Panc1 (cell line): ENCODE measurements at regions of chr6 and their contacts with region 1.

Region 1: DNA sequence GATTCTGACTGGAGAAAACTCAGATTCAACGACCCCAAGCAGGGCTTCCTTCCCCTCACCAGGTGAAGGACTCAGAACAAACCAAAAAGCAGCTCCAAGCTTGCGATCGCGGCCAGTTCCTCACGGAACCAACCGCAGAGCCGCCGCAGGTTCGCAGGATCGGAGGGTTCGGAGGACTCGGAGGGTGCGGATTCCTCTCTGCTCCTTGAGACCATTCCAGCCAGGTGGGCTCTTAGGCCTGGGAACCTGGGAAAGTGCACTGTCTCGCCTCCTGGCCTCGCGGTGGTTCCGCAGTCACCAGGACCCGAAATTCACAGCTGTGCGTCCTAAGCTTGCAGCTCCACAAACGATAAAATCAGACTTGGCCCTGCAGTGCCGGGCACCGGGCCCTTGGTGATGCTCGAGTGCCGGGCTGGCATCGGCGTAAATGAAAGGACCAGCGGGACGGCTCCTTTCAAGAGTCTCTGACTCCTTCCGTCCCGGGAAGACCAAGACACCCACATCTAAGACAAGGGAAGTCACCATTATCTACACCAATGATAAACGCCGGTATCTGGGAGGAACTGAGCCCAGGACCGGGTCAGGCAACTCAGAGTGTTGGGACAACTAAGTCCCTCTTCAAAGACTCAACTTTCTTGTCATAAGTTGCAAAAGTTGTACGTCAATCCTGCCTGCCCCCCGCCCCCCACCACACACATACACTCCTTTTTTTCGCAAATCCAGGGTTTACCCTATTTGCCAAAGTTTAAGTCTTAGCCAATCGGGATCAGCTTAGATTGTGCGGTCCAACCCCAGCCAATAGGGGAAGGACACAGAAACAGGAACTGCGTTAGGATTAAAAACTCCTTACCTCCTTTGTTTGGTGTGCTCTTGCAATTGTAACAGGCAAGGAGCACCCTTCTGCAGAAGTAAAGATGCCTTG is 69.8 kb upstream of the PRSS16 start:
- DNase-seq: peak; percentile 78
- ATAC-seq: peak; percentile 89
- H3K4me3 ChIP-seq: peak overlapping the region; percentile 92 to 100
- H3K27ac ChIP-seq: peak overlapping the region; percentile 87
- H3K4me1 ChIP-seq: no peaks in the 10 kb centered on the region
- H3K27me3 ChIP-seq: no peaks in the 10 kb centered on the region
- CTCF ChIP-seq: peak; percentile 81

Region 2: GRCh38 chr6:27132532-27133280 is 45.0 kb before region 1 on chr6:
- CTCF ChIA-PET with region 1: interaction called, 11 read pairs
- POLR2A ChIA-PET with region 1: no interaction called
- in situ Hi-C with region 1: no loop called
- intact Hi-C with region 1: no loop called
- DNase-seq: peak; percentile 100
- ATAC-seq: peak; percentile 84
- H3K4me3 ChIP-seq: peak overlapping the region; percentile 86 to 95
- H3K27ac ChIP-seq: peak overlapping the region; percentile 100
- H3K4me1 ChIP-seq: peaks cover 47% of the 10 kb centered on the region
- H3K27me3 ChIP-seq: no peaks in the 10 kb centered on the region
- CTCF ChIP-seq: no peak

Region 3: DNA sequence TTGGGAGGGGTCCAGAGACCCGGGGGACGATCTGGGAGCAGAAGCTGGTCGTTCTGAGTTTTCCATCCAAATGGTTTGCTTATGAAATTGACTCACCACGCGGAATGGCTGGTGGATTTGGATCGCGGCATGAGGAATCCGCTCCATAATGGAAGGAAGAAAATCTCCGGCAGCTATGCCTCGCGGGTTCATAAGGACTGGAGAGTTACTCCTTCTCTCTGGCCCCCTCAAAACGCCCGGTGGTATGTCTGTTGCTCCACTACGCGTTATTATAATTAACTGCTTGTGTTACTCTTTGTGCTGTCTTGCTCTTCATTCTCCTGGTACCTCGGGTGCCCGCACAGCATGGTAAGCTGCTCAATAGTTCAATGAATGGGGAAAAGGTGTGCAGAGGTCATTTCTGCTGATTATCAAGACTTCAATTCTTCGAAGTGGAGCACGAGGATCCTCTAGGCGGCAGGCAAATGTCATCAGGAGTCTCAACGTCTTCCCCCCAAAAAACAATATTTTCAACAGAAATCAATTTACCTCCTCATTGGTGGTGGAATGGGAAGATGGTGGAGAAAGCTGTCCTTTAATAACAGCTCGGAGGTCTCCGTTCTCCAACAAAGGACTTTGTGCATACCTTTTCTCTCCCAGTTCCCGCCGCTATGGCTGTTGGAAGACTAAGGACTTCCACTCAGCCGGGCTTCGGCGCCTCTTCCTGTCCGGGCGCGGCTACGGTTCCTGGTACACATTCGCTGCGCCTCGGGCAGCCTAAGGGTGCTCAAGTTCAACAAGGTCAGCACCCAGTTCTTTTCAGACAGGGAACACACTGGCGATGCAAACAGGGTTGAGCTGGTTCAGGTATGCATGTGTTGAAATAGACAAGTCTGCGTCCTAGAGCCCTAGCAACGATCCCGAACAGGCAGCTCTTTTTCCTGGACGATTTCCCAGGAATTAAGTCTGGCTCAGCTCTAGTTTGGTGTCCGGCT is 60.6 kb after region 1 on chr6:
- CTCF ChIA-PET with region 1: no interaction called
- POLR2A ChIA-PET with region 1: no interaction called
- in situ Hi-C with region 1: no loop called
- intact Hi-C with region 1: no loop called
- DNase-seq: no peak
- ATAC-seq: peak; percentile 65
- H3K4me3 ChIP-seq: peak overlapping the region; percentile 67 to 75
- H3K27ac ChIP-seq: peak overlapping the region; percentile 77
- H3K4me1 ChIP-seq: peaks cover 13% of the 10 kb centered on the region
- H3K27me3 ChIP-seq: peaks cover 2% of the 10 kb centered on the region
- CTCF ChIP-seq: peak; percentile 66

Region 4: DNA sequence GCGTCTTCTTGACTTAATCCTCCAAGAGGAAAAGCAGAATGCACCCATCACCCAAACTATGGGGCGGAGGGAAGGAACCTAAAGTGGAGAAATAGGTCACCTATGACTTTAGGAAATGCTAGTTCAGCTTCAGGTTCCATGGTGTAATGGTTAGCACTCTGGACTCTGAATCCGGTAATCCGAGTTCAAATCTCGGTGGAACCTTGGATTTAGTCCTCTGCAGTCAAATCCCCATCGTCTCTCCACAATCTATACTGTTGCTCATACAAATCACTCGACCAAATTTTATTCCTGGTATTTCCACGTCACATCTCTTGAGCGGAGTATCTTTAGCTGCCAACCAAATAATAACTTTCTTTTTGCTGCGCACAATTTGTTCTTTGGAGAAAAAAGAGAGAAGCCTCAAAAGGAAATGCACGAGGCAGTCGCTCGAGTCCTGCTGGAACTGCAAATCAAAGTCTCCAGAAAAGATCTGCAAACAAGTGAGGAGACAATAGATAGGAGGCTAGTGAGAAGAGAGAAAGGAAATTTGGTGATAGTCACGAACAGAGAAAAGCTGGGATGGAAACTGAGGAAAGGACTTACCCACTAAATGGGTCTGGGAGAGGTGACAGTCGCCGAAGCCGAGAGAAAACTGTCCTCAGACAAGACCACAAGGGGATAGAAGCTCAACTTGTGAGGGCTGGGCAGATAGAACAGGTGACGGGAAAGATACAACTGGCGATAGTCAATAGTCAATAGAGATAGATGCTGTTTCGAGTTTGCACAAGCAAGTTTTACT is 117.7 kb after region 1 on chr6:
- CTCF ChIA-PET with region 1: interaction called, 12 read pairs
- POLR2A ChIA-PET with region 1: no interaction called
- in situ Hi-C with region 1: no loop called
- intact Hi-C with region 1: no loop called
- DNase-seq: peak; percentile 95
- ATAC-seq: peak; percentile 81
- H3K4me3 ChIP-seq: peak overlapping the region; percentile 83 to 97
- H3K27ac ChIP-seq: peak overlapping the region; percentile 55; the same call in 1 of the 2 replicates
- H3K4me1 ChIP-seq: peaks cover 29% of the 10 kb centered on the region
- H3K27me3 ChIP-seq: no peaks in the 10 kb centered on the region
- CTCF ChIP-seq: no peak

Region 5: GRCh38 chr6:27352850-27353249 is 175.1 kb after region 1 on chr6:
- CTCF ChIA-PET with region 1: no interaction called
- POLR2A ChIA-PET with region 1: no interaction called
- in situ Hi-C with region 1: no loop called
- intact Hi-C with region 1: no loop called
- DNase-seq: no peak
- ATAC-seq: no peak
- H3K4me3 ChIP-seq: no peak overlapping the region
- H3K27ac ChIP-seq: no peak overlapping the region
- H3K4me1 ChIP-seq: no peaks in the 10 kb centered on the region
- H3K27me3 ChIP-seq: no peaks in the 10 kb centered on the region
- CTCF ChIP-seq: no peak

Region 6: DNA sequence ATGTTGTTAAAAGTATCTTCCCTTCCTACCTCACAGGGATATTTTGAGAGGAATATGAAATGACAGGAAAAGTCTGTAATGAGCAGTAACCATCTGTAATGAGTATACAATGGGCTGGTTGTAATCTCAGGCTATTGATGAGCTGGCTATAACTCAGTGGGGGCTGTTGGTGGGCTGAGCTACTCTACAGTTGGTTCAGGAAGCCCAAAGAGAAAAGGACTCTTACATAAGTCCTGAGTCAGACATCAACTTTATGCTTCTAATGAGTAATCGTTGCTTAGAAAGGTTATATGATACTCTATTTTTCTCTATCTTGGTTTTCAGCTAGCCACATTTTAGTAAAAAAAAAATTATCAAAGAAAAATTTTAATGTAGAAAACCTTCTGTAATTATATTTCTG is 237.2 kb after region 1 on chr6:
- CTCF ChIA-PET with region 1: no interaction called
- POLR2A ChIA-PET with region 1: no interaction called
- in situ Hi-C with region 1: no loop called
- intact Hi-C with region 1: no loop called
- DNase-seq: no peak
- ATAC-seq: no peak
- H3K4me3 ChIP-seq: no peak overlapping the region
- H3K27ac ChIP-seq: no peak overlapping the region
- H3K4me1 ChIP-seq: no peaks in the 10 kb centered on the region
- H3K27me3 ChIP-seq: no peaks in the 10 kb centered on the region
- CTCF ChIP-seq: no peak

Region 7: DNA sequence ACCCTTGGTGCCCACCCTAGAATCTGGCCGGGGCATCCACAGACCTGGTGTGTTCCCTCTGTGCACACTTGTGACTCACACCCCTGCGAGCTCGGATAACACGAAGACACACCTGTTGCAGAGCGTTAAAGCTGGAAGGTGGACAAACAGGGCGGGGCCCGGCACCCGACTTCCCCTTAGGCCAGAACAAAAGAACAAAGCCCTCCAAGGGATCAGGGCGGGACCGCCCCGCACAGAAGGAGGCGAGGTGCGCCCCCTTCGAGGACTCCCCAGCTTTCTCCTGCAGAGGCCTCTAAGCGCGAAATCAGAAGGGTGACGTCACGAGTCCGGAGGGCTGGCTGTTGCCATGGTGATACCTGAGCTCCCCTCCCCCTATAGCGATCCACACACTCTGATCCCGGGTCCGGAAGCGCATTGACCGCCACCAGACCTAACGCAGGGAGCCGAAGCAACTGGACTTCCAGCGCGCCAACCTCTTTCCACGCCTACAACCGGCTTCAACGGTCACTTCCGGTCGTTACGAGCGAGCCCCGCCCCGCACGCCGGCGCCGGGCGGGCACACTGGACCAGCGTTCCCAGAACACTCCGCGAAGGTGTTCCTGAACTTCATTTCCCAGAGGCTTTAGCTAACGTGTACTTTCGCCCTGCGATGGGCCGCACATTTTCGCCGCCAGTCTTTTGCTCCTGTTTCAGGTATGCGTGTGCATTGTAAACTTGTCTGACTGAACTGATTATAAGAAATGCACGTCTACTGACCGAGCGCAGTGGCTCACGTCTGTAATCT is 295.1 kb after region 1 on chr6 and contains the start of gene ZNF184:
- CTCF ChIA-PET with region 1: no interaction called
- POLR2A ChIA-PET with region 1: no interaction called
- in situ Hi-C with region 1: no loop called
- intact Hi-C with region 1: loop called (anchors 10 kb)
- DNase-seq: peak; percentile 95
- ATAC-seq: peak; percentile 98
- H3K4me3 ChIP-seq: peak within 1 kb of the TSS; percentile 91 to 92
- H3K27ac ChIP-seq: peak within 1 kb of the TSS; percentile 93
- H3K4me1 ChIP-seq: peaks cover 7% of the 10 kb centered on the region
- H3K27me3 ChIP-seq: no peaks in the 10 kb centered on the region
- CTCF ChIP-seq: no peak; the same call in 1 of the 2 replicates
- total RNA-seq, gene ZNF184: 7.8 TPM

Region 8: DNA sequence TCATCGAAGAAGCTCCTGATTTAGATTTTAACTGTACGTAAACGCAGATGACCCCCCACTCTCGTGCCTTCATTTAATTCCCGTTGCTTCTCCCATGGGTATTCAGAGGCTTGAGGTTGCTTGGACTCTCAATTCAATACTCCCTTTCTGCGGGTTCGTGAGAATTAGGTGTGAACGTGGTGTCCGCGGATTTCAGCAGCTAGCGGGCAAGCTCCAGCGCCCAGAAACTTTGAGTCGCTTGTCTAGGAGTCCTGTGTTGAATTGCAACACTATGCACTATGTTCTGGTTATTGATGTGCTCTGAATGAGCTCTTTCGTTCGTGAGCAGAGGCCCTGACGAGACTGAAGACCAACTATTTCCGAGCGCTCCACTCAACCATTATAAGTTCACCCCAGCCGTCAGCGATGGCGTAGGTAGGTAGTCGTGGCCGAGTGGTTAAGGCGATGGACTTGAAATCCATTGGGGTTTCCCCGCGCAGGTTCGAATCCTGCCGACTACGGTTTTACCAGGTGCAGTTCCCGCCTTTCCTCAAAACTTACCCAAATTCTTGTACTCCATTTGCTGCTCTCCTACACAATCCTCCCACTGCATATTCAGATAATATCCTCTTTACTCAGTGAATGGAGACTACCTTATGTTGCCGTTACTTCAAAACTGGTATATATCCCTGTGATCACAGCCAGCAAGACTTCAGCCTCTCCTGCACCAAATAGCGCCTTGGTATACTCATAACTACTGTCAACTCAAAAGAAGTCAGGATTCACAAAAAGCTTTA is 367.7 kb after region 1 on chr6:
- CTCF ChIA-PET with region 1: no interaction called
- POLR2A ChIA-PET with region 1: no interaction called
- in situ Hi-C with region 1: no loop called
- intact Hi-C with region 1: no loop called
- DNase-seq: peak; percentile 97
- ATAC-seq: peak; percentile 85
- H3K4me3 ChIP-seq: peak overlapping the region; percentile 81 to 92
- H3K27ac ChIP-seq: peak overlapping the region; percentile 68
- H3K4me1 ChIP-seq: peaks cover 33% of the 10 kb centered on the region
- H3K27me3 ChIP-seq: peaks cover 2% of the 10 kb centered on the region; the same call in 1 of the 2 replicates
- CTCF ChIP-seq: no peak